H1 (cell line): ENCODE measurements at regions of chr6 and their contacts with region 1.

Region 1: DNA sequence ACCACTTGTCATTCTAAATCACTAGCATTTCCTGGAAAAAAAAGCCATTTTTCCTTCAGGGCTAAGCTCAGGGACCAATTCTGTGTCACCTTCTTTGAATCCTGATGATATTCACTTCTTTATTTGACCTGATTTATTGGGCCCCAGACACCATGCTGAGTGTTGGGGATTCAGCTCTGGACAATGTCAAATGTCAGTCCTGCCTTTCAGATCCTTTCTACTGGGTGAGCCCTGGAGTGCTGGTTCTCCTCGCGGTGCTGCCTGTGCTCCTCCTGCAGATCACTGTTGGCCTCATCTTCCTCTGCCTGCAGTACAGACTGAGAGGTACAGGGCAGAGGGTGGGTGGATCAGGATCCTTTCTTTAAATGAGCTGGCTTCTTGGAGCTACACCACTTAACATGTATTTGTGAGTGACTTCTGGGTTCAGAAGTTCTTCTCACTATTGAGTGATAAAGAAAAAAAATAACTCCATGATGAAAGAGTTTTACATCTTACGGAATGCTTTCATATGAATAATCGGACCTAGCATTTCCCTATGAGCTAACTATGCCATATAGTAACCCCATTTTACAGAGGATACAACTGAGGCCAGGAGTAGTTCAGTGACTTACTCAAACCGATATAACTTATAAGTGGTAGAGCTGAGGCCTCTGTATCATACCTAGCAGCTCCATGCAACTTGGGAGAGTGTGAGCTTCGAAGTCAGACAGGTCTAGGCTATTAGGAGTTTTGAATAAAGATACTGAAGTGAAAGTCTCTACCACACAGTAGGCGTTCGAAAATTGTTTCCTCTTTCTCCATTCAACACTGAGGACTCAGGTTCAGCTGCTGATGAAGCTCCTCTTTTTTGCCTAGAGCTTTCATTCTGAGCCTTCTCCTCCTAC is 9.3 kb downstream of the MOG start:
- DNase-seq: no peak
- H3K4me3 ChIP-seq: peak overlapping the region in 2 of 4 experiments; percentile 1 to 3; a peak in 2 of 8 replicates
- H3K27ac ChIP-seq: peak overlapping the region; percentile 78
- H3K4me1 ChIP-seq: peaks cover 5 to 32% (median 24%) of the 10 kb centered on the region in 4 experiments; a peak in 6 of 7 replicates
- H3K27me3 ChIP-seq: no peaks in the 10 kb centered on the region
- CTCF ChIP-seq: no peak
- EP300 ChIP-seq: no peak
- POLR2A ChIP-seq: no peak
- RAD21 ChIP-seq: no peak

Region 2: DNA sequence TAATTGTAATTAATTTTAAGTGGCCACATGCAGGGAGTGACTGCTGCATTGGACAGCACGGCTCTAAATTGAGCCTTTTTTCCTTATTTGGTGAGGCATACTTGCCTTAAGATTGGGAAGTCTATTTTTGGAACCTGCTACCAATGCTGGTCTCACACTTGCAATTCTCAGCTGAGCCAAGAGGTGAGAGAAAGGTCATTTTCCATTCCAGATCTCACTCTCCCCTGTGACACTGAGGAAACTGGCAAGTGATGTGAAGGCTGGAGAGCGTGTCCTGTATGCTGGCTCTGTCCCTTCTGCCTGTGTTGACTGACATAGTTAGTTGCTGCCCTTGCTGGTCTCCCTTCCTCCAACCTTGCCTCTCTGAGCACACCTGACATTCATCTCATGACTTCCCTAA is 10.0 kb before region 1 on chr6:
- CTCF ChIA-PET with region 1: interaction called, 658 read pairs
- POLR2A ChIA-PET with region 1: interaction called, 78 read pairs
- DNase-seq: no peak
- H3K4me3 ChIP-seq: no peak overlapping the region
- H3K27ac ChIP-seq: no peak overlapping the region
- H3K4me1 ChIP-seq: peaks cover 4 to 13% (median 11%) of the 10 kb centered on the region in 4 experiments
- H3K27me3 ChIP-seq: no peaks in the 10 kb centered on the region
- CTCF ChIP-seq: no peak
- EP300 ChIP-seq: no peak
- POLR2A ChIP-seq: no peak
- RAD21 ChIP-seq: no peak

Region 3: DNA sequence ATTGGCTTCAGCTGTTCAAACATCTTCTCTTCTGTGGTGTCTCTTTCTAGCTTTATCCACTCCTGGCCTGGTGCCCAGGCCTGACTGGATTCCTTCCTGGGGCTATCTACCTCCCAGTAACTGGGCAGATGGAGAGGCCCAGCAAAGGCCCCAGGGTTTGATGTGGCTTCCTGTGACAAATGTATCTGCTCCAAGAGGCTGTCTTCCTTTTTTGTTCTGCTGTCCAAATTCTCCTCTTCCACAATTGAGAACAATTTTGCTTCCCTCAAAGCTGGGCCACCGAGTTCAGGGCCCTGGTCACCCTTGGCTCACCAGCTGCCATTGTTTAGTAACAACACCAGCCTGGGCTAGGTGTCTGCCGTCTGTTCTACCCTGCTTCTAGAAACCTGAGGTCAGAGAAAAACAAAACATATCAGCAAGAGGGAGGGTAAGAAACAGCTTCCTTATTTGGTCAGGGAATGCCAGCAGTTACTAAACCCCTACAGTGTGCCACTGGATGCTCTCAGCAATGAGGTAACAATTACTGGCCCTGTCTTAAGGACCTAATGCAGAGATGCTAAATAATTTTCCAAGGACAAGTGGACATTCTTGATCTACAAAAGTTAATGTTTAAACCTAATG is 10.9 kb after region 1 on chr6:
- CTCF ChIA-PET with region 1: interaction called, 502 read pairs
- POLR2A ChIA-PET with region 1: interaction called, 20 read pairs
- DNase-seq: no peak
- H3K4me3 ChIP-seq: no peak overlapping the region
- H3K27ac ChIP-seq: 0 out of 2 replicates have a peak overlapping the region, but pooled peaks have one; percentile 19
- H3K4me1 ChIP-seq: peaks cover 0 to 3% (median 0%) of the 10 kb centered on the region in 4 experiments; a peak in 1 of 7 replicates
- H3K27me3 ChIP-seq: no peaks in the 10 kb centered on the region
- CTCF ChIP-seq: no peak
- EP300 ChIP-seq: no peak
- POLR2A ChIP-seq: no peak
- RAD21 ChIP-seq: no peak